K562 (cell line): ENCODE measurements at regions of chr3 and their contacts with region 1.

Region 1: GRCh38 chr3:48739955-48740823 is 23.2 kb upstream of the IP6K2 start:
- DNase-seq: peak; percentile 81 to 85 (median 83)
- ATAC-seq: peak; percentile 94
- H3K4me3 ChIP-seq: no peak overlapping the region
- H3K27ac ChIP-seq: peak overlapping the region; percentile 66
- H3K4me1 ChIP-seq: peaks cover 7 to 17% of the 10 kb centered on the region in 2 experiments; a peak in 4 of 5 replicates
- H3K27me3 ChIP-seq: no peaks in the 10 kb centered on the region
- CTCF ChIP-seq: peak; percentile 78 to 83 (median 80)
- EP300 ChIP-seq: no peak
- POLR2A ChIP-seq: no peak
- RAD21 ChIP-seq: peak in 1 of 2 experiments; percentile 55; a peak in 3 of 4 replicates

Region 2: DNA sequence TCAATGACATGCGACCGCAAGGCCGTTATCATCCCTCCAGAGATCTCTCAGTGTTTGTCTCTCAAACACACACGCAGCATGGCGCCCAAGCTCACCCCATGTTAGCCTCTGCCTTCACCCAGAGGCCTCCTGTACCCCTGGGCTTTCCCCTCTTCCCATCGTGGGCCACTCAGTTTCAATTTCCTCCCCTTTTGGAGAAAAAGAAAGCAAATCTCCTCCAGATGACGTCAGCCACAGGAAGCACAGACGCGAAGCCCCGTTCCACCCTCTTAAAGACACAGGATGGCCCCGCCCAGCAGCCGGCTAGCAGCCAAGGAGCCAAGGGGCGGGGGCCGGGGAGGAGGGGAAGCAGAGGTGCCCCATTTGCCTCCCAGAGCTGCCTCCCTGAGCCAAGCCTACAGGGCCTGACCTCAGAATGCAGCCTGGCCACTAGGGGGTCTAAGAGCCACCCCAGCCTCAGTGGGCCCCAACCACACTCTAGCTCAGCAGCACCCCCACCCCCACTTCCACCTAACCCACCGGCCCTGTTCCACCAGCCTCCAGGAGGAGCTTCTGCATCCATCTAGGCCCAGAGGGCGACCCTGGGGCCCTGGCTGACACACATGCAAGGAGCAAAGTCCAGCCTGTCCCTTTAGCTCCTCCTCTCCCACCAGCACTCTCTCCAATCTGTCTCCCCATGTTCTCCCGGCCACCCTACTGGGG is 267.1 kb before region 1 on chr3:
- CTCF ChIA-PET with region 1: no interaction called
- POLR2A ChIA-PET with region 1: no interaction called
- in situ Hi-C with region 1: no loop called
- intact Hi-C with region 1: no loop called
- DNase-seq: peak; percentile 91 to 93 (median 92)
- ATAC-seq: peak; percentile 96
- H3K4me3 ChIP-seq: peak overlapping the region; percentile 46
- H3K27ac ChIP-seq: peak overlapping the region; percentile 99
- H3K4me1 ChIP-seq: peaks cover 5 to 42% of the 10 kb centered on the region in 2 experiments; a peak in 4 of 5 replicates
- H3K27me3 ChIP-seq: no peaks in the 10 kb centered on the region
- CTCF ChIP-seq: peak; percentile 54 to 59 (median 55)
- EP300 ChIP-seq: no peak
- POLR2A ChIP-seq: peak; percentile 88
- RAD21 ChIP-seq: peak in 1 of 2 experiments; percentile 22; a peak in 1 of 4 replicates

Region 3: GRCh38 chr3:48716982-48717746 is 23.0 kb before region 1 on chr3 and contains the start of gene IP6K2:
- CTCF ChIA-PET with region 1: no interaction called
- POLR2A ChIA-PET with region 1: interaction called, 5 read pairs
- in situ Hi-C with region 1: no loop called
- intact Hi-C with region 1: loop called (anchors 1 kb)
- DNase-seq: peak; percentile 91 to 96 (median 94)
- ATAC-seq: peak; percentile 100
- H3K4me3 ChIP-seq: peak within 1 kb of the TSS; percentile 98
- H3K27ac ChIP-seq: peak within 1 kb of the TSS; percentile 98
- H3K4me1 ChIP-seq: peaks cover 3 to 9% of the 10 kb centered on the region in 2 experiments; a peak in 4 of 5 replicates
- H3K27me3 ChIP-seq: no peaks in the 10 kb centered on the region
- CTCF ChIP-seq: no peak
- EP300 ChIP-seq: no peak
- POLR2A ChIP-seq: peak; percentile 88
- RAD21 ChIP-seq: no peak
- polyA plus RNA-seq, gene IP6K2: 19.6 to 26.3 TPM

Region 4: GRCh38 chr3:48847504-48848423 is 107.6 kb after region 1 on chr3 and contains the start of gene PRKAR2A:
- CTCF ChIA-PET with region 1: no interaction called
- POLR2A ChIA-PET with region 1: no interaction called
- in situ Hi-C with region 1: no loop called
- intact Hi-C with region 1: loop called (anchors 5 kb)
- DNase-seq: peak; percentile 90 to 93 (median 92)
- ATAC-seq: peak; percentile 88
- H3K4me3 ChIP-seq: peak within 1 kb of the TSS; percentile 81
- H3K27ac ChIP-seq: peak within 1 kb of the TSS; percentile 87
- H3K4me1 ChIP-seq: peaks cover 13% of the 10 kb centered on the region in 2 experiments; a peak in 4 of 5 replicates
- H3K27me3 ChIP-seq: no peaks in the 10 kb centered on the region
- CTCF ChIP-seq: no peak
- EP300 ChIP-seq: no peak
- POLR2A ChIP-seq: peak; percentile 61; the same call in 1 of the 2 replicates
- RAD21 ChIP-seq: no peak
- polyA plus RNA-seq, gene PRKAR2A: 15.9 to 19.8 TPM

Region 5: DNA sequence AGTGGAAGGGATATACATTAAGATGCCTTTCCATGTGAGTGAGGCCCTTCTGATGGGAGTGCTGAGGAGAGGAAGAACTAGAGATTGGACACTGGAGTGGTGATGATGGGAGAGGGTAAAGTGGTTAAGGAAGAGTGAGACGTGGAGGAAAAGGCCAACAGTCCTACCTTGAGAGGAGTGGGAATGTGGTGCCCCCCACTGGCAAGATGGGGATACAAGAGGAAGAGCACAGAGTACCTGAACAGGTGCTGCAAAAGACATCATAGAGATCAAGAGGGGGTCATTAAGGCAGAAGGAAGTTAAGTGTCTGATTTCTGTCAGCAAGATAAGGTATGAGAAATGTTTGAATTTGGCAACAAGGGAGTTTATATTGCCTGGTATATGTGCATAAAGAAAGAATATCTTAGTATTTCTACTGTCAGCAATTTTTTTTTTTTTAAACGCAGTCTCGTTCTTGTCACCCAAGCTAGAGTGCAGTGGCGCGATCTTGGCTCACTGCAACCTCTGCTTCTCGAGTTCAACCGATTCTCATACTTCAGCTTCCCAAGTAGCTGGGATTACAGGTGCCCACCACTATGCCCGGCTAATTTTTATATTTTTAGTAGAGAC is 212.4 kb after region 1 on chr3:
- CTCF ChIA-PET with region 1: interaction called, 4 read pairs
- POLR2A ChIA-PET with region 1: no interaction called
- in situ Hi-C with region 1: no loop called
- intact Hi-C with region 1: loop called (anchors 2 kb)
- DNase-seq: peak in 2 of 4 experiments; percentile 30 to 31
- ATAC-seq: peak; percentile 76
- H3K4me3 ChIP-seq: no peak overlapping the region
- H3K27ac ChIP-seq: no peak overlapping the region; the same call in 2 of the 3 replicates
- H3K4me1 ChIP-seq: peaks cover 0 to 3% of the 10 kb centered on the region in 2 experiments; a peak in 1 of 5 replicates
- H3K27me3 ChIP-seq: no peaks in the 10 kb centered on the region
- CTCF ChIP-seq: peak; percentile 10 to 52 (median 51); a peak in 5 of 6 replicates
- EP300 ChIP-seq: no peak
- POLR2A ChIP-seq: no peak
- RAD21 ChIP-seq: peak in 1 of 2 experiments; percentile 41; a peak in 2 of 4 replicates